Body of pancreas (tissue), 4 donors: ENCODE measurements at regions of chr1 and their contacts with region 1.

Region 1: GRCh38 chr1:8848663-8849386 is 29.7 kb downstream of the ENO1 start:
- DNase-seq: peak; percentile 92 to 97 (median 96)
- ATAC-seq: peak; percentile 100
- H3K4me3 ChIP-seq: no peak overlapping the region
- H3K27ac ChIP-seq: peak overlapping the region in 3 of 4 donors; percentile 22 to 62 (median 51)
- H3K4me1 ChIP-seq: peaks cover 18% of the 10 kb centered on the region
- H3K27me3 ChIP-seq: no peaks in the 10 kb centered on the region
- CTCF ChIP-seq: peak; percentile 93 to 98 (median 95)
- POLR2A ChIP-seq: no peak

Region 2: DNA sequence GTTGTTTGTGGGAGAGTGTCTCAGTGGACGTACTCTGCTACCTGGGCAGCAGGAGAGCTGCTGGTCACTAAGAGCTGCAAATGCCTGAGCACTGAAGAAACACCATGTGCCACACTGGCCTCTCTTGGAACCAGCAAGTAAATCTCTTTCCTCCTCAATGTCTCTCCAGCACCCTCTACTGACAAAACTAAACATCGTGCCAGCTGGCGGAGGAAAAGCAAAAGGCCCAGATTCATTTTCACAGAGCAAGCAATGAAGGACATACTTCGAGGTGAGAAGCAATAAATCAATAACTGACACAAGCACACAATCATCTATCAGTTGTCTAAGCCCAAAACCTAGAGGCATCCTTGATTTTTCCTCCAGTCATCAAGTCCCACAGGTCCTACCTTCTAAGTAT is 109.4 kb before region 1 on chr1:
- intact Hi-C with region 1: loop called (anchors 10 kb)
- DNase-seq: no peak
- ATAC-seq: no peak
- H3K4me3 ChIP-seq: no peak overlapping the region
- H3K27ac ChIP-seq: no peak overlapping the region
- H3K4me1 ChIP-seq: peaks cover 17% of the 10 kb centered on the region
- H3K27me3 ChIP-seq: no peaks in the 10 kb centered on the region
- CTCF ChIP-seq: no peak
- POLR2A ChIP-seq: no peak